ENCODE measurements at regions of chr19 and their contacts with region 1.

Region 1: DNA sequence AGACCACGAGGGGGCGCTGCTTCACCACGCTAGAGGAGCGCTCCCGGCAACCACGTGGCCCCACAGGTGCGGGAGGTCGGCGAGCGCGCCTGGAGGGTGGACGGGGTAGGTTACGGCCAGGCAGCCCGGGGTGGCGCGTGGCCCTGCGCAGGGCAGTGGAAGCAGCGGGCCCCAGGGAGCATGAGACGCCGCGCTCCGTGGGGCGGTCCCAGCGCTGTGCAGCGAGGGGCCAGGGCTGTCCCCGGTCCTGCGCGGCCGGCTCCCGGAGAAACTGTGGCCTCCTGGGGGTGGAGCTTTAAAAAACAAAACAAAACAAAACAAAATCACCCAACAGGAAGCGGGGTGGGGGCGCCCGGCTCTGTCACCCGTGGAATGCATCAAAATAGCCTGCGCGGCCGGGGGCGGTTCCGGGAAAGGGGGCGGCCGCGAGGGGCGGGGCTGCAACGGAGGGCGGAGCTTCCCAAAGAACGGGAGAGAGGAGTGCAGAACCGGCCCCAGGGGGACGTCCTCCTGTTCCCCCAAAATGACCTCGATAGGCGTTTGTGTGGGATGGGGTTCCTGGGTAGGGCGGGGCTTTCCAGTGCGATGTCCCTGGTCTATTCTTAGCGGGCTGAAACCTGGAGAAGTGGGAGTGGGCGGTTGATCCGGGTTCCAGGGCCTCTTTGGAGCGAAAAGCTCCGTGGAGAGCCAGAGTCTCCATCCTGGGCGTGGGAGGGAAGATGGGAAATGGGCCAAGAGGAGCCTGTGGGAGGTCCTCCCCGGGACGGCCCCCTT is 27.3 kb downstream of the NUMBL start:
- DNase-seq: peak; percentile 95 to 97
- ATAC-seq: peak; percentile 79 to 87
- H3K4me3 ChIP-seq: peak overlapping the region; percentile 57
- H3K27ac ChIP-seq: peak overlapping the region; percentile 81 to 83
- H3K4me1 ChIP-seq: peaks cover 39% of the 10 kb centered on the region
- CTCF ChIP-seq: peak; percentile 100
- EP300 ChIP-seq: no peak
- POLR2A ChIP-seq: peak; percentile 50
- RAD21 ChIP-seq: peak; percentile 100

Region 2: DNA sequence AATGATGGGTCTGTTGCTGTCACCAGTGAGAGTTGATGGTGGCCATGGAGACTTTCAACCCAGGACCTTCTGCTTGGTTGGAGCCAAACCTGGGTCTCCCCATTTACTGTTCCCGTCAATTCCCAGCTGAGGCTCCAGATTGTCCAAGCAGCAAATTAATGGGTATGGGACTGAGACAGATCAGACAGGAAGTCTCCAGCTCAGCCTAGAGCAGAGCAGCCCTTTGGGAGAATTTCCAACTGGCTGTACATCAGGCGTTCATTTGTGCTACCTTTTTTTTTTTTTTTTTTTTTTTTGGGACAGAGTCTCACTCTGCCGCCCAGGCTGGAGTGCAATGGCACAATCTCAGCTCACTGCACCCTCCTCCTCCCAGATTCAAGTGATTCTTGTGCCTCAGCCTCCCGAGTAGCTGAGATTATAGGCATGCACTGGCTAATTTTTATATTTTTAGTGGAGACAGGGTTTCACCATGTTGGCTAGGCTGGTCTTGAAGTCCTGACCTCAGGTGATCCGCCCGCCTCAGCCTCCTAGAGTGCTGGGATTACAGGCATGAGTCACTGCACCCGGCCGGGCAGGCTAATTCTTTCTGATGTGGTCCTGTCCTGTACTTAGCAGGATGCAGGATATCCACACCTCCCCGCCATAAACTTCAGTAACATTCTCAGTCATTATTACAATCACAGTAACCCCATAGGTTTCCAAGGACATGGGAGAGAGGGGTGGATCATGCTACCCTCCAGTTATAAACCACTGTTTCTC is 462.6 kb before region 1 on chr19:
- CTCF ChIA-PET with region 1: no interaction called
- POLR2A ChIA-PET with region 1: no interaction called
- DNase-seq: no peak
- ATAC-seq: peak in 1 of 2 experiments; percentile 34; a peak in 2 of 6 replicates
- H3K4me3 ChIP-seq: no peak overlapping the region
- H3K27ac ChIP-seq: no peak overlapping the region
- H3K4me1 ChIP-seq: no peaks in the 10 kb centered on the region
- CTCF ChIP-seq: no peak
- EP300 ChIP-seq: no peak
- POLR2A ChIP-seq: no peak
- RAD21 ChIP-seq: no peak

Region 3: GRCh38 chr19:40565910-40566495 is 97.1 kb before region 1 on chr19:
- CTCF ChIA-PET with region 1: no interaction called
- POLR2A ChIA-PET with region 1: no interaction called
- DNase-seq: no peak
- ATAC-seq: no peak
- H3K4me3 ChIP-seq: no peak overlapping the region
- H3K27ac ChIP-seq: no peak overlapping the region
- H3K4me1 ChIP-seq: peaks cover 13% of the 10 kb centered on the region
- CTCF ChIP-seq: no peak
- EP300 ChIP-seq: no peak
- POLR2A ChIP-seq: no peak
- RAD21 ChIP-seq: no peak

Region 4: GRCh38 chr19:40603389-40604135 is 59.5 kb before region 1 on chr19:
- CTCF ChIA-PET with region 1: interaction called, 10 read pairs
- POLR2A ChIA-PET with region 1: interaction called, 3 read pairs
- DNase-seq: peak; percentile 99 to 100
- ATAC-seq: peak; percentile 41 to 80
- H3K4me3 ChIP-seq: peak overlapping the region; percentile 36
- H3K27ac ChIP-seq: peak overlapping the region; percentile 55 to 85
- H3K4me1 ChIP-seq: peaks cover 58% of the 10 kb centered on the region
- CTCF ChIP-seq: peak; percentile 20; the same call in 1 of the 3 replicates
- EP300 ChIP-seq: no peak
- POLR2A ChIP-seq: peak; percentile 20; the same call in 1 of the 2 replicates
- RAD21 ChIP-seq: no peak; a peak in 1 of 5 replicates

Region 5: DNA sequence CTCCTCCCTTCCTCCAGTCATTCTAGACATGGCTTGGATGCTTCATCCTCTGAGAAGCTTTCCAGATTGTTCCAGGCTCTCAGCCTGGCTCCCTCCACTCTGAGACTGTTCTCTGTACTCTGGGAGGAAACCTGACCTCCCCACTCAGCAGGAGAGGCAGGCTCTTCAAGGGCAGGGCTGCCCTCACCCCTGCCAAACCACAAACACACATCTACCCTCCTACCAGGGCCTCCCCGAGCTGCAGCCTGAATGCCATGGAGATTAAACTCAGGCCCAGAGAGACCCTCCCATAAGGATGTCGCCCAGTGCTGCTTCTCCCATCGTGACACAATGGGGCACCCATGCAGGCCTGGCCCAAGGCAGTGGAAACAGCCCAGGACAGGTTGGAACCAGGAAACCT is 11.2 kb after region 1 on chr19:
- CTCF ChIA-PET with region 1: interaction called, 140 read pairs
- POLR2A ChIA-PET with region 1: interaction called, 5 read pairs
- DNase-seq: no peak
- ATAC-seq: no peak; a peak in 1 of 6 replicates
- H3K4me3 ChIP-seq: no peak overlapping the region
- H3K27ac ChIP-seq: no peak overlapping the region
- H3K4me1 ChIP-seq: no peaks in the 10 kb centered on the region
- CTCF ChIP-seq: no peak
- EP300 ChIP-seq: no peak
- POLR2A ChIP-seq: no peak
- RAD21 ChIP-seq: no peak

Region 6: DNA sequence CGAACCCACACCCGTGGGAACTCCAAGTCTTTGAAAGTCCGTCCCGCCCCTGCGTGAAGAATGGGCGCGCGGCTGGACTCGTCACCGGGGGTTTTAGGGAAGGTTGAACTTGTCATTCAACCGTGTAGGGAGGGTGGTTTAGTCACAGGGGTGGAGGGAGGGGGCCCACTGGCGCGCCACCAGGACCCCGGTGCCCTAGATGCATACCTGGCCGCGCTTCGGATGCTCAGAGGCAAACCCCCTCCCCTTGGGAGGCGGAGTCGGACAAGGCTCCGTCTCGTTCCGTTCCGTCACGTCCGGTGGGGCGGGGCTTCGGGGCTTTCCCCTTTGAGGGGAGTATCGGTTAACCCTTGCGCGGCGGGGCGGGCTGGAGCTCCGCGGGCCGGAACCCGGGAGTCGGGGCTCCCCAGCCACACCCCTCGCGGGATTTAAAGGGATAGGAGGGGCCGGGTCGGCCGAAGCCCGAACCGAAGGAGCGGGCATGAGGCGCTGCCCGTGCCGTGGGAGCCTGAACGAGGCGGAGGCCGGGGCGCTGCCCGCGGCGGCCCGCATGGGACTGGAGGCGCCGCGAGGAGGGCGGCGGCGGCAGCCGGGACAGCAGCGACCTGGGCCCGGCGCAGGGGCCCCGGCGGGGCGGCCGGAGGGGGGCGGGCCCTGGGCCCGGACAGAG is 53.7 kb after region 1 on chr19 and contains the starts of genes COQ8B and ITPKC:
- CTCF ChIA-PET with region 1: interaction called, 23 read pairs
- POLR2A ChIA-PET with region 1: interaction called, 15 read pairs
- DNase-seq: peak; percentile 99 to 100
- ATAC-seq: peak; percentile 45 to 61
- H3K4me3 ChIP-seq: peak within 1 kb of the TSS; percentile 64
- H3K27ac ChIP-seq: peak within 1 kb of the TSS; percentile 88 to 93
- H3K4me1 ChIP-seq: peaks cover 34% of the 10 kb centered on the region
- CTCF ChIP-seq: no peak
- EP300 ChIP-seq: no peak; a peak in 1 of 5 replicates
- POLR2A ChIP-seq: peak; percentile 60
- RAD21 ChIP-seq: peak in 1 of 2 experiments; percentile 14; a peak in 2 of 5 replicates
- polyA plus RNA-seq, gene COQ8B: 43.9 and 47.2 TPM in 2 replicates
- polyA plus RNA-seq, gene ITPKC: 6.5 and 8.7 TPM in 2 replicates

Region 7: DNA sequence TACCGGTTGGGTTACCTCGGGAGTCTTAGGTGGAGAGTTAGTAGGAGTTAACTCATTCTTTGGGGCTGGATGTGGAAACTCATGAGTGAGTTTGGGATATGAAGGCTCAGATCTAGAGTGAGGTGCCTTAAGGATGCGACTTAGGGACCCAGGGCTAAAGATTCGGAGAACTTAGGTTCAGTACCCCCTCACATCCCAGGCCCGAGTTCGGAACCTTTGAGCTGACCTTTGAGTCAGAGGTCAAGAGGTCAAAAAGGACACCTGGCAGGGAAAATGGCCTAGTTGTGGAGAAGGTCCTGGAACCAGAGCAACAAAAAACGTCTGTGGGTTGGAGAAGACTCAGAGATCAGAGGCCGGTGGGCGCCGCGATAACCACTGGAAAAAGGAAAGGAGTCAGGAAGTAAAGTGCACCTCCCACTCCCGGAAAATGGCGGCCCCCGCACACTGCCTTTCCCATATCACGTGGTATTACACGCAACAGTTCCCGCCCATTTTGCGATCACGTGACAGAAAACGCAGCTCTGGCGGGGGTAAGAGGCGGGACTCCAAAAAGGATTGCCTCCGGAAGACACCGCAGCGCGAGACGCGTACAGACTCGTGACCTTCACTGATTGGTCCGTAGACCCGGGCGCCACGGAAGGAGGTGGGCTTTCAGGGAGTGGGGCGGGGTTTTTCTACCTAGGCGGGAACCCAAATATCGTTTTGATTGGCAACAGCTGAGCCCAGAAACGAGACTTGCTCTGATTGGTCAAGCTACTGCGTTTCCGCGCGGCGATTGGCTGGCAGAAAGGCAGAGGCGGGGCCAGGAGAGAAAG is 87.2 kb after region 1 on chr19 and contains the start of gene ACTMAP:
- CTCF ChIA-PET with region 1: interaction called, 71 read pairs
- POLR2A ChIA-PET with region 1: interaction called, 19 read pairs
- DNase-seq: peak; percentile 100
- ATAC-seq: peak; percentile 88 to 92
- H3K4me3 ChIP-seq: peak within 1 kb of the TSS; percentile 66
- H3K27ac ChIP-seq: peak within 1 kb of the TSS; percentile 91
- H3K4me1 ChIP-seq: peaks cover 51% of the 10 kb centered on the region
- CTCF ChIP-seq: no peak
- EP300 ChIP-seq: no peak
- POLR2A ChIP-seq: peak; percentile 52; the same call in 1 of the 2 replicates
- RAD21 ChIP-seq: no peak
- polyA plus RNA-seq, gene ACTMAP: 7.8 and 11.7 TPM in 2 replicates

Region 8: GRCh38 chr19:40785526-40785925 is 122.4 kb after region 1 on chr19:
- CTCF ChIA-PET with region 1: interaction called, 12 read pairs
- POLR2A ChIA-PET with region 1: no interaction called
- DNase-seq: no peak
- ATAC-seq: peak; percentile 55 to 62
- H3K4me3 ChIP-seq: no peak overlapping the region
- H3K27ac ChIP-seq: no peak overlapping the region
- H3K4me1 ChIP-seq: no peaks in the 10 kb centered on the region
- CTCF ChIP-seq: no peak
- EP300 ChIP-seq: no peak
- POLR2A ChIP-seq: no peak
- RAD21 ChIP-seq: no peak

Region 9: GRCh38 chr19:40827386-40828247 is 164.5 kb after region 1 on chr19:
- CTCF ChIA-PET with region 1: interaction called, 16 read pairs
- POLR2A ChIA-PET with region 1: no interaction called
- DNase-seq: no peak
- ATAC-seq: no peak
- H3K4me3 ChIP-seq: no peak overlapping the region
- H3K27ac ChIP-seq: no peak overlapping the region
- H3K4me1 ChIP-seq: peaks cover 18% of the 10 kb centered on the region
- CTCF ChIP-seq: no peak
- EP300 ChIP-seq: 0 out of 5 replicates have a peak, but pooled peaks of 1 of the 2 experiments have one; percentile 6
- POLR2A ChIP-seq: no peak; the same call in 1 of the 2 replicates
- RAD21 ChIP-seq: no peak